Common myeloid progenitor, CD34-positive (primary cell): ENCODE measurements at regions of chr6 and their contacts with region 1.

Region 1: DNA sequence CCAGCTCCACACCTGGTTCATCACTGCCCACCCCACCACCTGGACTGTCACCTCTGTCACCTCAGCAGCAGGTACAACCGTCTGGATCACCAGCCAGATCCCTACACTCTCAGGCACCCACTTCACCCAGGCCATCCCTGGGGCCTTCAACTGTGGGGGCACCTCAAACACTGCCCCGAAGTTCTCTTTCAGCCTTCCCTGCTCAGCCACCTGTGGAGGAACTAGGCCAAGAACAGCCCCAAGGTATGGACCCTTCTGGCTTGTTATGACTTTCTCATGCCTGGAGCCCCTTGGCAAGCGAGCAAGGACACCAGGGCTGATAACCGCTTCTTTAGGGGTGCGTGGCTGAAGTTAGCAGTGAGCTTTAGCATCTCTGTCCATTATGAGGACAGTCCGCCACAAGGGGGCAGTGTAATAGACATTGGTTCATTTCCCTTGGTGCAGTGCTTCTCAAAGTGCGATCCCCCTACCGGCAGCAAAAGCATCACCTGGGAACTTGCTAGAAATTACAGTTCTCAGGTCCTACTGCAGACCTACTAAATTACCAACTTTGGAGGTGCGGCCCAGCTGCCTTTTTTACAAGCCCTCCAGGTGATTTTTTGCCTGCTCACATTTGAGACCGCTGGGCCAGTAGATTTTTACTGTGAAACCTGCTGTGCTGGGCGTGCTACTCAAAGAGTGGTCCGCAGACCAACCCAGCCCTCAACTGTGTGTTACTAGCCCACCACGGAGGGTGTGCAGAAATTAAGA is 32.5 kb downstream of the PNPLA1 start:
- DNase-seq: peak; percentile 94 to 97 (median 97)
- H3K4me3 ChIP-seq: no peak overlapping the region
- H3K27ac ChIP-seq: no peak overlapping the region
- H3K4me1 ChIP-seq: peaks cover 0 to 10% (median 5%) of the 10 kb centered on the region in 4 experiments
- H3K27me3 ChIP-seq: no peaks in the 10 kb centered on the region

Region 2: GRCh38 chr6:36050292-36050691 is 252.1 kb before region 1 on chr6:
- CTCF ChIA-PET with region 1: no interaction called
- POLR2A ChIA-PET with region 1: no interaction called
- DNase-seq: no peak
- H3K4me3 ChIP-seq: no peak overlapping the region
- H3K27ac ChIP-seq: peak overlapping the region in 1 of 2 experiments; percentile 38
- H3K4me1 ChIP-seq: peaks cover 2 to 25% (median 6%) of the 10 kb centered on the region in 4 experiments
- H3K27me3 ChIP-seq: no peaks in the 10 kb centered on the region

Region 3: GRCh38 chr6:36290661-36291620 is 11.5 kb before region 1 on chr6:
- CTCF ChIA-PET with region 1: interaction called, 26 read pairs
- POLR2A ChIA-PET with region 1: no interaction called
- DNase-seq: peak in 2 of 3 donors; percentile 23 to 31
- H3K4me3 ChIP-seq: no peak overlapping the region
- H3K27ac ChIP-seq: no peak overlapping the region
- H3K4me1 ChIP-seq: peaks cover 0 to 10% (median 2%) of the 10 kb centered on the region in 4 experiments
- H3K27me3 ChIP-seq: peaks cover 0 to 12% (median 3%) of the 10 kb centered on the region in 5 experiments

Region 4: GRCh38 chr6:36312854-36313648 is 10.6 kb after region 1 on chr6:
- CTCF ChIA-PET with region 1: interaction called, 13 read pairs
- POLR2A ChIA-PET with region 1: no interaction called
- DNase-seq: peak; percentile 40 to 81 (median 75)
- H3K4me3 ChIP-seq: no peak overlapping the region
- H3K27ac ChIP-seq: no peak overlapping the region
- H3K4me1 ChIP-seq: peaks cover 0 to 18% (median 13%) of the 10 kb centered on the region in 4 experiments
- H3K27me3 ChIP-seq: no peaks in the 10 kb centered on the region